Activated CD8-positive, alpha-beta T cell treated with anti-CD3 and anti-CD28 coated beads, Interleukin-2, amount 10 ng/mL, durations not matched to agents 7 days and 5 days (primary cell): ENCODE measurements at regions of chr12 and their contacts with region 1.

Region 1: GRCh38 chr12:109844983-109845823 is 12.0 kb upstream of the TRPV4 start:
- DNase-seq: peak; percentile 91
- ATAC-seq: peak; percentile 96
- H3K4me3 Mint-ChIP-seq: peak overlapping the region; percentile 7
- H3K27ac Mint-ChIP-seq: no peak overlapping the region
- H3K4me1 Mint-ChIP-seq: peaks cover 10% of the 10 kb centered on the region
- H3K27me3 Mint-ChIP-seq: no peaks in the 10 kb centered on the region

Region 2: DNA sequence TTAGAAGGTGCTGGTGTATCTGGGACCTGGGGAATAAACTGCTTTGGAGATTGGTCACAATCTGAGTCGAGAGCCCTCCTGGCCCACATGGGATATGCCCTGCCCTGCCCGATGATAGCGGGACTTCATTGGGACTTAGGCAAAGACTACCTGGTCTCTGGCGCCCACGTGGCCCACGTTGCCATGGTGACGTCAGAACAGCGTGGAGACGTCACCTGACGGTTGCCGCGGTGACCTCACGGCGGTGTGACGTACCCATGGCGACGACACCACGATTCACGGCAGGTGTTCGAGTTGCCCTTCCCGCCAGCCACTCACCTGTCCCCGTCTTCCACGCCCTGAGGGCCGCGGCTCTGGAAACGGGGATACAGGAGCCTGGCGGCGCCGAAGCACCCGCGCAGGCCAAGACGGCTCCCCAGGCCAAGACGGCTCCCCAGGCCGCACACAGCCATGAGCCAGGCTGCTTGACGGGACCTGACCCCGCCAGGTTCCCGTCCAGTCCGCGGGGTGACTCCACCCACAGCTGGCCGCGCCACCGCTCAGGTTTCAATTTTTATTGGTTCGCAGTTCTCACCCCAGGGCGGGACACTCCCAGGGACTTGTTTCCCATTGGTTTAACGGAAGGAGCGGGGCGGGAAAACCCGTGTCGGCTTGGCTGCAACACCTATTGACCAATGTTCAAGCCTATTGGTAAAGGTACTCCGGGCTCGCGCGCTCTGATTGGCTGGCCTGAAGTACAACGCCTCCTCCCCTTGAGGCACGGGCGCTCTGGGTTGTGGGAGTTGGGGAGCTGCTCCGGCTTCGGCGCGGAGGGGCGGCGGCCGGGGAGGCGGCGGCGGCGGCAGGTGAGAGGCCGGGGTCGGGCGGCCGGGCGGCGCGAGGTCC is 271.9 kb before region 1 on chr12 and contains the starts of genes MMAB and MVK:
- CTCF ChIA-PET with region 1: interaction called, 12 read pairs
- POLR2A ChIA-PET with region 1: no interaction called
- DNase-seq: peak; percentile 100
- ATAC-seq: peak; percentile 96
- H3K4me3 Mint-ChIP-seq: peak within 1 kb of the TSS; percentile 86
- H3K27ac Mint-ChIP-seq: peak within 1 kb of the TSS; percentile 97
- H3K4me1 Mint-ChIP-seq: peaks cover 26% of the 10 kb centered on the region
- H3K27me3 Mint-ChIP-seq: no peaks in the 10 kb centered on the region
- total RNA-seq, gene MMAB: 42.8 to 44.3 TPM
- total RNA-seq, gene MVK: 25.0 to 28.5 TPM

Region 3: GRCh38 chr12:109804820-109805761 is 40.1 kb before region 1 on chr12:
- CTCF ChIA-PET with region 1: interaction called, 80 read pairs
- POLR2A ChIA-PET with region 1: interaction called, 4 read pairs
- DNase-seq: peak; percentile 70
- ATAC-seq: peak; percentile 72
- H3K4me3 Mint-ChIP-seq: no peak overlapping the region
- H3K27ac Mint-ChIP-seq: no peak overlapping the region
- H3K4me1 Mint-ChIP-seq: no peaks in the 10 kb centered on the region
- H3K27me3 Mint-ChIP-seq: no peaks in the 10 kb centered on the region

Region 4: DNA sequence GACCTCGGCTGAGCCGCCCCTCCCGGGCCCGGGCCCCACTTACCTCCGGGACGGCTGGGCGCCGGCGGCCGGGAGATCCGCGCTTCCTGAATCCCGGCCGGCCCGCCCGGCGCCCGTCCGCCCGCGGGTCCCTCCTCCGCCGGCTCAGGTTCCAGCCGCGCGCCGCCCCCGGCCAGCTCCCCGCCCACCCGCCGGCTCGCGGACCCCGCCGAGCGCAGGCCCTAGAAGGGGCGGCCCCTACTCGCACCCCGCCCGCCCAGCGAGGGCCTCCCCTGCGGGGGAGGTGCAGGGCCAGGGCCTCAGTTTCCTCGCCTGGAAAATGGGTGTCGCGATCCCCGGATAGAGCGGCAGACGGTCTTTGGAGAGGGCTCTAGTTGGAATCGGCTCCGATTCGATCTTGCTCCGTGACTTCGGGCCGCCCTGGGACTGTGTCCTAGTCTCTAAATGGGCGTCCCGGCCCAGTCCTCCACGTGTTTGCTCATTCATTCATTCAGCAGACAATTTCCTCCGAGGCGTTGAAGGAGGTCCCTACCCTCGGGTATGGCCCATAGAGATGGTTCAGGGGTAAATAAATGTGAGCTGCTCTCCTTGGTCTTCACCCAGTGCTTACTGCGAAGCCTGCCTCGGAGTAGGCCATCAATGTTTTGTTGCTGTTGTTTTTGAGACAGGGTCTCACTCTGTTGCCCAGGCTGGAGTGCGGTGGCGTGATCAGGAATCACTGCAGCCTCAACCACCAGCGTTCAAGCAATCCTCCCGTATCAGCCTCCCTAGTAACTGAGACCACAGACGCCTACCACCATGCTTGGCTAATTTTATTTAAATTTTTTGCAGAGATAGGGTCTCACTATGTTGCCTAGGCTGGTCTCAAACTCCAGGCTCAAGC is 11.7 kb before region 1 on chr12 and contains the start of gene TRPV4:
- CTCF ChIA-PET with region 1: interaction called, 43 read pairs
- POLR2A ChIA-PET with region 1: interaction called, 3 read pairs
- DNase-seq: no peak
- ATAC-seq: no peak
- H3K4me3 Mint-ChIP-seq: no peak within 1 kb of the TSS
- H3K27ac Mint-ChIP-seq: no peak within 1 kb of the TSS
- H3K4me1 Mint-ChIP-seq: peaks cover 1% of the 10 kb centered on the region
- H3K27me3 Mint-ChIP-seq: peaks cover 31% of the 10 kb centered on the region
- total RNA-seq, gene TRPV4: not detected

Region 5: DNA sequence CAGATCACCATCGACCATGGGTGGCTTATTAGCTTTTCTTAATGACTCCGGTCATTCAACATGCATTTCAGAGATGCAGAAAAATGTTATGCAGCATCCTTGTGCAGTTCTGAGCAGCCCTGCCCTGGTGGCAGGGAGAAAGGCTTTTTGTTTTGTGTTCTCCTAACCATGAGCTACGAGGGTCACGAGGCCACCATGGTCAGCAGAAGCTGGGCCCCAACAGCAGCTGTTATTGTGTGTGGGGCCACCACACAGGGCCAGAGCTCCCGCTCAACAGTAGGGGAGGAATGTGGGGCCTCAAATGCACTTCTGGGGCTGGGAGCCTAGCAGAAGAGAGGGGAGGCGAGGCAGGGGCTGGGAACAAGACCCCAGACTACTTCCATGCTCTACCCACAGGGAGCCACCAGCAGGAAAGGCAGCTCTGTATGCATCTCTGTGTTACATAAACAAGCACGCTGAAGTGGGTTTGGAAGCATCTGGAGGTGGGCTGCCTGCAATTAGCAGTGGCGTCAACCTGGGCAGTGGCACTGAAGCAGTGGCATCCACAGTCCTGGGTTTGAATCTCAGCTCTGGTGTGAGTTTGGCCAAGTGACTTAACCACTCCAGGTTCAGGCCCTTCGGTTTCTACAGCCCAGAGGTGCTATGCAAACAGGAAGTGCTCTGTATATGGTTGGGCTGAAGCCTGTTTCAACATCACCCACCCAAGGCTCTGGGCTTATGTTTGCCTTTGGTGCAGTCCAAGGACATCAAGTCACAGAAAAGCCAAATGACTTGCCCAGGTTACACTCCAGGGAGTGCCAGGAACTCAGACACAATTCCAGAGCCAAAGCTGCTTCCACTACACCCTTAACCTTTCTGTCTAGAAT is 18.9 kb after region 1 on chr12:
- CTCF ChIA-PET with region 1: interaction called, 39 read pairs
- POLR2A ChIA-PET with region 1: no interaction called
- DNase-seq: peak; percentile 48
- ATAC-seq: peak; percentile 91
- H3K4me3 Mint-ChIP-seq: no peak overlapping the region
- H3K27ac Mint-ChIP-seq: peak overlapping the region; percentile 77
- H3K4me1 Mint-ChIP-seq: peaks cover 21% of the 10 kb centered on the region
- H3K27me3 Mint-ChIP-seq: no peaks in the 10 kb centered on the region